ENCODE measurements at regions of chr22 and their contacts with region 1.

Region 1: GRCh38 chr22:22802339-22802970 is 85.2 kb upstream of the IGLL5 start:
- DNase-seq: peak; percentile 71
- ATAC-seq: peak; percentile 73
- H3K4me3 Mint-ChIP-seq: no peak overlapping the region
- H3K27ac Mint-ChIP-seq: no peak overlapping the region
- H3K4me1 Mint-ChIP-seq: peaks cover 2% of the 10 kb centered on the region
- H3K27me3 Mint-ChIP-seq: peaks cover 22% of the 10 kb centered on the region

Region 2: DNA sequence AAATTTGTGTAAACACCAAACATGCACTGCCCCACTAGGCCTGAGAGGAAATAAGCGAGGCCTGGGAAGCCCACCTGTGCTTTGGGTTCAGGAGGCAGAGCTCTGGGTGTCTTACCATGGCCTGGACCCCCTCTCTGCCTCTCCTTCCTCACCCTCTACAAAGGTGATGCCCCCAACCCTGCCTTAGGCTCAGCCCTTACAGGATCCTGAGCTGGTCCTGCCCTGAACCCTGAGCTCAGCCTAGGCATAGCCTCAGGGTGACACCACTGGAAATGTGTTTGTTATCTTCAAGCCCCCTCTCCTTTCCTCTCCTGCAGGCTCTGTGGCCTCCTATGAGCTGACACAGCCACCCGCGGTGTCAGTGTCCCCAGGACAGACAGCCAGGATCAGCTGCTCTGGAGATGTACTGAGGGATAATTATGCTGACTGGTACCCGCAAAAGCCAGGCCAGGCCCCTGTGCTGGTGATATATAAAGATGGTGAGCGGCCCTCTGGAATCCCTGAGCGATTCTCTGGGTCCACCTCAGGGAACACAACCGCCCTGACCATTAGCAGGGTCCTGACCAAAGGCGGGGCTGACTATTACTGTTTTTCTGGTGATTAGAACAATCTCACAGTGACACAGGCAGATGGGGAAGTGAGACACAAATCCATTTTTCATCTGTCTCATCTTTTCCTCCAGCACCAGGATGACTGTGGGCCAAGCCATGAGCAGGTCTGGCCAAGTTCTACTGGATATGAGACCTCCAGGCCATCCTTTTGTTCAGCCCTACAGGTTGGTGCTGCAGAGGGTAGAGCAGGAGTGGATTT is 40.3 kb before region 1 on chr22:
- CTCF ChIA-PET with region 1: no interaction called
- POLR2A ChIA-PET with region 1: no interaction called
- DNase-seq: peak; percentile 5
- ATAC-seq: no peak
- H3K4me3 Mint-ChIP-seq: no peak overlapping the region
- H3K27ac Mint-ChIP-seq: no peak overlapping the region
- H3K4me1 Mint-ChIP-seq: peaks cover 22% of the 10 kb centered on the region
- H3K27me3 Mint-ChIP-seq: no peaks in the 10 kb centered on the region

Region 3: DNA sequence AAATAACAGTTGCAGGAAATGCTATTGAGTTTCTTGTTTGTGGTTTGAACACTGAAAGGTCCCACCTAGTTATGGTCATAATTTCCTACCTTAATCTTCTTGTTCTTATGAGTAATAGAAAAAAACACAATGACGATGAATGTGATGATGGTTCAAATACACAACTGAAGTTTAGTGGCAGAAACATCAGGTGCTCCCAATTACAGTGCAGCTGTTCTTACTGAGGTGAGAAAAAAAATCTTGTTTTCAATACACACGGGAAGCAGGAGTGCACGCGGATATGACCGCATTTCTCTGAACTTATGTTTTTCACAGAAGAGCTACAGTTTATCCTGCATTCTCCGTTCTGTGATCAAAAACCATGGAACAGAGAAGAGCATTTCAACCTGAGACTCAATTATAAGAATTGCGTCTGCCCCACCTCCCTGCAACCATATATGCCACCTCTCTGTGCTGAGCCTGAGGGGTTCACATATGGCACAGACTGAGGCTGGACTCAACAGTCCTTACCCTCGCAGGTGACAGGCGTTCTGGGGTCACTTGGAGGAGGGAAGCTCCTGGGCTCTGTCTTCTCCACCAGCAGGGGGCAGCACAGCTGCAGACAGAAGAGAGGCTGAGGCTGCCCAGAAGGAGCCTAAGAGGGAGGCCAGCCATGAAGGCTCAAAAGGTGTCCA is 14.5 kb before region 1 on chr22:
- CTCF ChIA-PET with region 1: interaction called, 23 read pairs
- POLR2A ChIA-PET with region 1: no interaction called
- DNase-seq: peak; percentile 81
- ATAC-seq: peak; percentile 90
- H3K4me3 Mint-ChIP-seq: no peak overlapping the region
- H3K27ac Mint-ChIP-seq: peak overlapping the region; percentile 30
- H3K4me1 Mint-ChIP-seq: peaks cover 25% of the 10 kb centered on the region
- H3K27me3 Mint-ChIP-seq: peaks cover 13% of the 10 kb centered on the region

Region 4: GRCh38 chr22:22830193-22830592 is 27.7 kb after region 1 on chr22:
- CTCF ChIA-PET with region 1: interaction called, 12 read pairs
- POLR2A ChIA-PET with region 1: interaction called, 6 read pairs
- DNase-seq: no peak
- ATAC-seq: no peak
- H3K4me3 Mint-ChIP-seq: no peak overlapping the region
- H3K27ac Mint-ChIP-seq: no peak overlapping the region
- H3K4me1 Mint-ChIP-seq: peaks cover 11% of the 10 kb centered on the region
- H3K27me3 Mint-ChIP-seq: peaks cover 31% of the 10 kb centered on the region

Region 5: GRCh38 chr22:22870577-22871404 is 68.3 kb after region 1 on chr22:
- CTCF ChIA-PET with region 1: interaction called, 20 read pairs
- POLR2A ChIA-PET with region 1: no interaction called
- DNase-seq: peak; percentile 27
- ATAC-seq: no peak
- H3K4me3 Mint-ChIP-seq: no peak overlapping the region
- H3K27ac Mint-ChIP-seq: no peak overlapping the region
- H3K4me1 Mint-ChIP-seq: peaks cover 13% of the 10 kb centered on the region
- H3K27me3 Mint-ChIP-seq: peaks cover 38% of the 10 kb centered on the region

Region 6: DNA sequence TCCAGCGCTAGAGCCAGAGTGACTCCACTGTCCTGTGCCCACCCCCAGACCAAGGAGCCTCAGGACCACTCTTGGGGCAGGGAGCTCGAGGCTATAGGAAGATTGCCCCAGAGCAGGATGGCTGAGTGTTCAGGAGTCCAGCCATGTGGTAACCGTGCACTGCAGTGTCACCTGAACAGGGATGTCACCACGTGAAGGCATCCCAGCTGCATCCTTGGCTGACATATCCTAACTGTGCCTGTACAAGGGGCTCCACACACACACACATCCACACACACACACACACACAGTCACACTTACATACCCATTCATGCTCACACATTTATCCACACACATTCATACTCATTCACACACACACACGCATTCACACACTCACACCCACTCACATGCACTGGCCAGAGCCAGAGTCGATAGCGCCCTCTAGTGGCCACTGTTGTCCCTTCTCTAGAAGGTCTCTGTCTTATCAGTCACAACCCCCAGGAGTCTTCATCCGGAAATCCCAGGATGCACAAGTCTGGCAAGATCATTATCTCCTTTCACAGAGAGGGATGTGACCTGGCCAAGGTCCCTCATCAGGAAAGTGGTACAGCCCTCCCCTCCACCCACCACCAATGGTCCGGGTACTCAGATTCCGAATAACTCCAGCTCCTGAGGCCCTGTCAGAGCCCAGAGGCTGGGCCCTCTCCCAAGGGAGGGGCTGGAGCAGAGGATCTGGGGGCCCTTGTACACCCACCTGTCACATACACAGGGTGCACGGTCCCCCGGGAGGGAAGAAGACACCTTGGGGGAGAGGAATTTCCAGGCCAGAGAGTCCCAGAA is 140.3 kb after region 1 on chr22:
- CTCF ChIA-PET with region 1: interaction called, 10 read pairs
- POLR2A ChIA-PET with region 1: no interaction called
- DNase-seq: peak; percentile 85
- ATAC-seq: peak; percentile 89
- H3K4me3 Mint-ChIP-seq: no peak overlapping the region
- H3K27ac Mint-ChIP-seq: no peak overlapping the region
- H3K4me1 Mint-ChIP-seq: no peaks in the 10 kb centered on the region
- H3K27me3 Mint-ChIP-seq: peaks cover 21% of the 10 kb centered on the region